Prostate gland (tissue), 2 donors: ENCODE measurements at regions of chr20 and their contacts with region 1.

Region 1: DNA sequence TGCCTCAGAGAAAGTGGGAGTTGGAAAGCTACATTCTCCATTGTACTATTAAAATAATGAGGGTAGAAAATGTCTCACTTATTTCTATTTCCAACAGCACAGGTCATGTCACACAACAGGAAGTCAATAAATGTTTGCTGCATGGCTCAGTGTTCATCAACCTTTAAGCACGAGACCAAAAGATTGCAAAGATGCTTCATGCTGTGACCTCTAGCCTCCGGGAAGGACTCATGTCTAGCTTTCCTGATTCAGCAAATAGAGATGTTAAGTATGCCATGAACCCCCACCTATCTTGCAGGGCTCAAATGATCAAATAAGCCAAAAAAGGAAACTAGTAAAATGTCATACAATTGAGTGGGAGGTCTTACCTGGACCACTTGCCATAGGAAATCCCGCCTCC is 57.4 kb downstream of the NCOA6 start:
- DNase-seq: no peak
- H3K4me3 ChIP-seq: no peak overlapping the region
- H3K27ac ChIP-seq: no peak overlapping the region
- H3K4me1 ChIP-seq: no peaks in the 10 kb centered on the region
- H3K27me3 ChIP-seq: no peaks in the 10 kb centered on the region
- CTCF ChIP-seq: no peak
- POLR2A ChIP-seq: no peak

Region 2: GRCh38 chr20:34312544-34313217 is 455.4 kb before region 1 on chr20:
- intact Hi-C with region 1: loop called (anchors 10 kb)
- DNase-seq: peak; percentile 81
- H3K4me3 ChIP-seq: peak overlapping the region in 1 of 2 donors; percentile 15
- H3K27ac ChIP-seq: no peak overlapping the region
- H3K4me1 ChIP-seq: peaks cover 6% of the 10 kb centered on the region
- H3K27me3 ChIP-seq: no peaks in the 10 kb centered on the region
- CTCF ChIP-seq: peak; percentile 82 to 100 (median 96)
- POLR2A ChIP-seq: no peak

Region 3: DNA sequence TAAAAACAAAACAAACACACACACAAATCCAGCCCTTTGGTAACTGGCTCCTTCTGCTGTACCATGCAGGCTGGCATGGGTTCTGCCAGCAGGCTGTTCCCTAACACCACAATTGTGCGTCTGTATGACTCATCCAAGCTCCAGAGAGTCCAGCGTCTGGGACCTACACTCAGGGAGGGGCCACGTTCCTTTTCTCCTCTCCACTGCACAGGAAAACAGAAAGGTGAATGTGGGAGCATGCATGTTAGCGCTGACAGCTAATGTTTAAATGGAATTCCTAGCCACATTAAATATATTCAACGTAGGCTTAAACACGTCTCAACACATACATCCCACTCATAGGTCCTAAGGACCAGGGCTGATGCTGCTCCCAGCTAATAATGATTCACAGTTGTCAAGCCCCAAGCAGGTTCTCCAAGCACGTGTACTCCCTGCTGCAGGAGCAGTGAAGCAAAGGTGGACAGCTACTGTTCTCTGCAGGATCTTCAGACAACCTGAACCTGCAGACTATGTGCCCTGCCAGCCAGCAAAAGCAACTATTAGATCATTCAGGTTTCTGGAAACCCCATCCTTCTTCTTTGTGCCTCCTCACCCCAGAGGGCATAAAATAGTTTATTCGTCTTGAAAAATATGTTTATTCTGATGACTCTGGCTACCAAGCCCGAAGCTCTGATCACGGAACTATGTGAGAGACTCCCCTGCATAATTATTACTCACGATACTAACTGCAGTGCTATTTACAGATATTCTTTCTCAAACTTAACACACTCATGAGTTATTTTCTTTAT is 188.7 kb before region 1 on chr20:
- intact Hi-C with region 1: loop called (anchors 2 kb)
- DNase-seq: peak; percentile 76
- H3K4me3 ChIP-seq: no peak overlapping the region
- H3K27ac ChIP-seq: no peak overlapping the region
- H3K4me1 ChIP-seq: no peaks in the 10 kb centered on the region
- H3K27me3 ChIP-seq: no peaks in the 10 kb centered on the region
- CTCF ChIP-seq: peak in 3 of 4 experiments; percentile 51 to 87 (median 86)
- POLR2A ChIP-seq: no peak

Region 4: DNA sequence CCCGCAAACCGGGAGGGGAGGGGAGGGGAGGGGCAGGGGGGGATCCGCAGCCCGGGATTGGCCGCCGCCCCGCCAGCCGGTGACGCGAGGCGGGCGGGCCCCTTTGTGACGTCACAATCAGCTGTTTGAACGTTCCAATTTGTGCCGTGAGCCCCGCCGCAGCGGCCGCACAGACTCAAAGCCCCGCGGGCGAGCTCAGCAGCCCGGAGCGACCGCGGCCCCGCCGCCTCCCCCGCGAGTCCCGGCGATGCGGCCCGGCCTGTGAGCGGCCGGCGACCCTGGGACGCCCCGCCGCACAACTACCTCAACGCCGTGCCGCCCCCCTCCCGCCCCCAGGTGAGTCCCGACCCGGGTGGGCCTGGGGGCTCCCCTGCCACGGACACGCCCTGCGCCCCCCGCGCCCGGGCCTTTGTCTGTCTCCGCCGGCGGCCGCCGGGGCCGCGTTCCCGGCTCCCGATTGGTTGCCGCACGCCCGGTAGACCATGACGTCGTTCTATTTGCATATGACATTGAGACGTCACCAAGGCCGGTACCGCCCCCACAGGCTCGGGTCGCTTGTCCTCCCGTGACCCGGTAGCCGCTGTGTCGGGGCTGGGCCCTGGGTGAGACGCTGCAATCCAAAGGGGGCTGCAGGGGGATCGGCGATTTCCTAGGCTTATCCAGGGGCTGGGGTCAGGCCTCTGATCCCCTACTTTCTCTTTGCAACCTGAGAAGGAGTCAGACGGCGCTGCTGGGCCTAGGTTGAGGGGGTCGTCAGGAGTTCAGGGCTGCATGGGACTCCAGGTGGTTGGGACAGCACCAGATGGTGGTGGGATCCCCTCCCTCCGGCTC is 63.7 kb before region 1 on chr20 and contains the start of gene TP53INP2:
- intact Hi-C with region 1: loop called (anchors 5 kb)
- DNase-seq: peak; percentile 92
- H3K4me3 ChIP-seq: peak within 1 kb of the TSS; percentile 92 to 100
- H3K27ac ChIP-seq: peak within 1 kb of the TSS; percentile 97 to 100
- H3K4me1 ChIP-seq: no peaks in the 10 kb centered on the region
- H3K27me3 ChIP-seq: no peaks in the 10 kb centered on the region
- CTCF ChIP-seq: peak in 1 of 4 experiments; percentile 9
- POLR2A ChIP-seq: peak; percentile 87
- total RNA-seq, gene TP53INP2: 26.0 to 39.4 TPM

Region 5: GRCh38 chr20:35008411-35009342 is 240.6 kb after region 1 on chr20:
- intact Hi-C with region 1: no loop called
- DNase-seq: no peak
- H3K4me3 ChIP-seq: no peak overlapping the region
- H3K27ac ChIP-seq: no peak overlapping the region
- H3K4me1 ChIP-seq: no peaks in the 10 kb centered on the region
- H3K27me3 ChIP-seq: no peaks in the 10 kb centered on the region
- CTCF ChIP-seq: no peak
- POLR2A ChIP-seq: no peak